ENCODE measurements at regions of chr12 and their contacts with region 1.

Region 1: DNA sequence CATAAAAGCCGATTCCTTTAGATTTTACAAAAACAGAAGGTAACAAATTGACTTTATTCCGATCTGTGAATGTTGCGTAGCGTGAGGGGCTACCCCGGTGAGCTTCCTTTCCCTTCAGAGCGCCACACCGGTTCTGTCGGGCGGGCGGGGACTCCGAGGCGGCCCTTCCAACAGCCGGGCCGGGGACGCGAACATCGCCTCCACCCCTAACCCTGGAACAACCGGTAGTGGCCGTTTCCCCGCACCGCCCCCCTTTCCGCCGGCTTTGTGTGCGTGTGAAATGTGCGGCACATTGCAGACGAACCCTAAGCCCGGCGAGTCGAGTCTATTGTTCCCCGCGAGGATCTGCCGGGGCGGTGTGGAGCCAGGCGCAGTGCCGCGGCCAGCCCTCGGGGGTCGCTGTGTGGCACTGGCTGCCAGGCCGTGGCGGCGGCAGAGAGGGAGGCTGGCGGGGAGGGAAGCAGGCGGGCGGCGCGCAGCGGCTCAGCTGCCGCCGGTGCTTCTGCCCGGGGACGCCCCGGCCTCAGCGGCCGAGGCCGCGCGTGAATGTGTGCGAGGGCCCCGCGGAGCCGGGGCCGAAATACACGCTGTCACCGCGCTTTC is 775 bp upstream of the ARID2 start:
- DNase-seq: peak; percentile 97
- H3K4me3 ChIP-seq: peak overlapping the region; percentile 77 to 99 (median 86)
- H3K27ac ChIP-seq: peak overlapping the region; percentile 90
- H3K4me1 ChIP-seq: peaks cover 9% of the 10 kb centered on the region
- H3K27me3 ChIP-seq: no peaks in the 10 kb centered on the region
- CTCF ChIP-seq: peak; percentile 84

Region 2: GRCh38 chr12:45130881-45131281 is 597.9 kb before region 1 on chr12:
- CTCF ChIA-PET with region 1: no interaction called
- dilution Hi-C with region 1: no loop called
- in situ Hi-C with region 1: no loop called
- intact Hi-C with region 1: loop called (anchors 2 kb)
- DNase-seq: peak; percentile 68
- H3K4me3 ChIP-seq: no peak overlapping the region
- H3K27ac ChIP-seq: no peak overlapping the region
- H3K4me1 ChIP-seq: no peaks in the 10 kb centered on the region
- H3K27me3 ChIP-seq: peaks cover 3% of the 10 kb centered on the region
- CTCF ChIP-seq: peak; percentile 77 to 80

Region 3: DNA sequence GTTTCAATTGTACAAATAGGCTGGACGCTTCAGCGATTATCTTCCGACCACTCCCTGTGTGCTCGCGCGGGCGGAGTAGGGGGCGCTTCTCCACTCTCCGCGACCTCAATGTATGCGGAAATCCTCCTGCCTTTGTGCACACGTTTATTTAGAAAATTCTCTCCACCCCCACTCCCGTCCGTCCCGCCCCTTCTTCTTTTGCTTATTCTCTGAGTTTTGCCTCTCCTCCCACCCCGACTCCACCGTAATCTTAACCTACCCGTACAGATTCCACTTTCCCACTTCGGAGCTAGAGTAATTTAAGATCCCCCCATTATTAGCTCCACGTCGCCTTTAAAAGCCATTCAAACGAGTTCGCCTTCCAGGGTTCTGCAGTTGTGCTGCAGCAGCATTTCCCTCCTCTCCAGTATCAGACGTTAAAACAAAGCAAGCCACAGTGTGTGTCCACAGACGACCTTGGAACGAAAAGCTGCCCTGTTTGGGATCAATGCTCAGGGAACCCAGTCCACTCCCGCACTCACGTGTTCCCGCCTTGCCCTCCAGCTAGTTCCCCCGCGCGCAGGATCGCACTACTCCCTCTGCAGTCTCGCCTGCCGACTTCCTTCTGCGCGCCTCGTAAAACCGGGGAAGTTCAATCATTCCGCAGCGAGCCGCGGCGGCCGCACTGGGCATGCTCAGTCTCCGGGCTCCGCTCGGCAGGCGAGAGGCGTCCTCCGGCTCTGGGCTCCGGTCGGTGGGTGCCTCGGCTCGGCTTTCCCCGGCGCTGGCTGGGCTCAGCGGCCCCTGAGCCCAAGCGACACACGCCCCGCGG is 513.1 kb before region 1 on chr12 and contains the start of gene ANO6:
- CTCF ChIA-PET with region 1: no interaction called
- dilution Hi-C with region 1: no loop called
- in situ Hi-C with region 1: loop called in 1 of 2 experiments (anchors 25 kb)
- intact Hi-C with region 1: loop called (anchors 5 kb)
- DNase-seq: peak; percentile 88
- H3K4me3 ChIP-seq: peak within 1 kb of the TSS; percentile 65 to 88 (median 77)
- H3K27ac ChIP-seq: peak within 1 kb of the TSS; percentile 89
- H3K4me1 ChIP-seq: peaks cover 24% of the 10 kb centered on the region
- H3K27me3 ChIP-seq: no peaks in the 10 kb centered on the region
- CTCF ChIP-seq: peak in 1 of 2 donors; percentile 38
- total RNA-seq, gene ANO6: 57.0 to 77.5 TPM

Region 4: GRCh38 chr12:45415393-45415817 is 313.3 kb before region 1 on chr12:
- CTCF ChIA-PET with region 1: no interaction called
- dilution Hi-C with region 1: no loop called
- in situ Hi-C with region 1: no loop called
- intact Hi-C with region 1: loop called (anchors 2 kb)
- DNase-seq: peak; percentile 99
- H3K4me3 ChIP-seq: no peak overlapping the region
- H3K27ac ChIP-seq: peak overlapping the region; percentile 31
- H3K4me1 ChIP-seq: peaks cover 7% of the 10 kb centered on the region
- H3K27me3 ChIP-seq: no peaks in the 10 kb centered on the region
- CTCF ChIP-seq: no peak

Region 5: GRCh38 chr12:45557016-45557415 is 171.7 kb before region 1 on chr12:
- CTCF ChIA-PET with region 1: interaction called, 10 read pairs
- dilution Hi-C with region 1: no loop called
- in situ Hi-C with region 1: no loop called
- intact Hi-C with region 1: no loop called
- DNase-seq: no peak
- H3K4me3 ChIP-seq: no peak overlapping the region
- H3K27ac ChIP-seq: no peak overlapping the region
- H3K4me1 ChIP-seq: no peaks in the 10 kb centered on the region
- H3K27me3 ChIP-seq: no peaks in the 10 kb centered on the region
- CTCF ChIP-seq: no peak

Region 6: DNA sequence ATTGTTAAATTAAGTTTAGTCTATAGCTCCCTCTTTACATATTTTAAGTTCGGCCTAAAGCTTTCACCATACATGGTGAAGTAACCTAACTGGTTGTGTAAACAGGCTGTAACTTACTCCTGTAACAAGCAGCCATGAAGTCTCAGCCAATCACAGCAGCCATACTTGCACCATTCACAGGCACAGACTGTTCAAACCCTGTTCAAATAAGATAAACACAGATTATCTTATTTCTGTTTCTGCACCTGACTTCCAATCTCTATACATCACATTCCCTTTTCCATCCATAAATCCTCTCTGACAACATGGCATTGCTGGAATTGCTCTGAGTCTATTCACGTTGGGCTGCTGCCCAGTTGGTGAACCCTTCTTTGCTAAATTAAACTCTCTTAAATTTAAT is 33.7 kb before region 1 on chr12:
- CTCF ChIA-PET with region 1: interaction called, 11 read pairs
- dilution Hi-C with region 1: no loop called
- in situ Hi-C with region 1: no loop called
- intact Hi-C with region 1: no loop called
- DNase-seq: no peak
- H3K4me3 ChIP-seq: no peak overlapping the region
- H3K27ac ChIP-seq: no peak overlapping the region
- H3K4me1 ChIP-seq: no peaks in the 10 kb centered on the region
- H3K27me3 ChIP-seq: no peaks in the 10 kb centered on the region
- CTCF ChIP-seq: no peak

Region 7: GRCh38 chr12:45705404-45705803 is 23.3 kb before region 1 on chr12:
- CTCF ChIA-PET with region 1: no interaction called
- dilution Hi-C with region 1: no loop called
- in situ Hi-C with region 1: no loop called
- intact Hi-C with region 1: no loop called
- DNase-seq: no peak
- H3K4me3 ChIP-seq: no peak overlapping the region
- H3K27ac ChIP-seq: no peak overlapping the region
- H3K4me1 ChIP-seq: no peaks in the 10 kb centered on the region
- H3K27me3 ChIP-seq: no peaks in the 10 kb centered on the region
- CTCF ChIP-seq: no peak

Region 8: GRCh38 chr12:45789025-45789424 is 60.3 kb after region 1 on chr12:
- CTCF ChIA-PET with region 1: no interaction called
- dilution Hi-C with region 1: no loop called
- in situ Hi-C with region 1: no loop called
- intact Hi-C with region 1: no loop called
- DNase-seq: no peak
- H3K4me3 ChIP-seq: no peak overlapping the region
- H3K27ac ChIP-seq: no peak overlapping the region
- H3K4me1 ChIP-seq: no peaks in the 10 kb centered on the region
- H3K27me3 ChIP-seq: no peaks in the 10 kb centered on the region
- CTCF ChIP-seq: no peak

Region 9: DNA sequence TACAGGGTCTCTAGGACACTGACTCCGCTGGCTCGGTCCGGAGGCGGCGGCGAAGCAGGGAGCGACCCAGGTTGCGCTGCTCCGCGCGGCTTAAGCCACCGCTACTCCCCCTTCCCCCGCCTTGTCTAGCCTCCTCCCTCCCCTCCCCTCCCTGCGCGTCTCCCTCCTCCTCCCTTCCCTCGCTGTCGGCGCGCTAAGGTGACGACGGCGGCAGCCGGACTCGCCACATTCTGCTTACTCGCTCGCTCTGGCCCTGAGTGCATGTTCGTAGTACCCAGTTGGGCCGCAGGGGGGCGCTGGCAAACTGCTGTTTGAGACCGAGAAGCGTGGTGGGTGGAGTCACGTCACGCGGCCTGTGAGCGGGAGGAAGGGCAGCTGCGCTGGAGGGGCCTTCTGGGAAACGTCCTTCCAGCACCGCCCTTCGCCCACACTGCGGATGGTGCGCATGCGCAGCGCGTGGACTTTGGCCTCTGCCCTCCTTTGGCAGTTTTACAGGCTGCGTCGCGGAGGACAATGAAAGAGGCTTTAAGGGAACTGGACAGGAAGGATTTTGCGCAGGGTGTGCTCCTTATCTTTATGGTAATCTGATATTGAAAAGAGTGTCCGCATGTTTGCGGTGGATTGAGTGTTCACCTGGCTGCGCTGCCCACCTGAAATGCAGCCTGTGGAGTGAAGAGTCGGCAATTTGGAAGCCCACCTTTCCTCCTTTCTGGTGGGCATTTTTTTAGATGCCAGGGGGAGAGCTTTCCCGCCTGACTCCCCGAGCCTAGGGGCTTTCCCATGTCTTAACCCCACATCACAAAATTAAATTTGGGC is 261.9 kb after region 1 on chr12 and contains the start of gene SCAF11:
- CTCF ChIA-PET with region 1: no interaction called
- dilution Hi-C with region 1: no loop called
- in situ Hi-C with region 1: no loop called
- intact Hi-C with region 1: loop called (anchors 1 kb)
- DNase-seq: peak; percentile 100
- H3K4me3 ChIP-seq: peak within 1 kb of the TSS; percentile 53 to 96 (median 67)
- H3K27ac ChIP-seq: peak within 1 kb of the TSS; percentile 83
- H3K4me1 ChIP-seq: peaks cover 23% of the 10 kb centered on the region
- H3K27me3 ChIP-seq: no peaks in the 10 kb centered on the region
- CTCF ChIP-seq: peak; percentile 92 to 95
- total RNA-seq, gene SCAF11: 99.2 to 100 TPM